GM10248 (cell line): ENCODE measurements at regions of chr6 and their contacts with region 1.

Region 1: DNA sequence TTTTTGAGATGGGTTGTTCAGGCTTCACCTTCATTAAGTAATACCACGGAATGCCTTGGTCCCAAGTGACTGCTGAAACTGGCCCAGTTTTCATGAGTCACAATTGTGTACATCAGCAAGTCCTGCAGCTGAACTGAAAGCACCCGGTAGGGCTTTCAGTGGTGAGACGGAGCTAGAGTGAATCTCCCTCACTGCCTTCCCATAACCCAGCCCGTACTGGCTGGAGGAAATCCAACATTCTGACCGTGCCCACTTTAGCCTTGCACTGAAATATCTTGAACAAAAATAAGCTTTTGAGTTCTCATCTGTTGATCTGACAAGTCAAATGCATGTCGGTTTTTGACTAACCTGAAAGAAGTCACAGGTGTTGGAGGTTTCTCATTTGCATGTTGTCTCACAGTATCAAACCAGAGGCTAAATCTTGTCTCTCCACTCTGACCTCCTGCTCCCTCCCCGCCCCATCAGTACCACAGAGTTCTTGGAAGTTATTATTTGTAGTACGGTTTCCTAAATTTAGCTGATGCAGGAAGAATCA is 35.9 kb downstream of the DUSP22 start:
- DNase-seq: peak; percentile 84
- CTCF ChIP-seq: no peak

Region 2: GRCh38 chr6:305371-306206 is 22.6 kb before region 1 on chr6:
- CTCF ChIA-PET with region 1: interaction called, 420 read pairs
- POLR2A ChIA-PET with region 1: interaction called, 5 read pairs
- DNase-seq: peak; percentile 93
- CTCF ChIP-seq: no peak

Region 3: DNA sequence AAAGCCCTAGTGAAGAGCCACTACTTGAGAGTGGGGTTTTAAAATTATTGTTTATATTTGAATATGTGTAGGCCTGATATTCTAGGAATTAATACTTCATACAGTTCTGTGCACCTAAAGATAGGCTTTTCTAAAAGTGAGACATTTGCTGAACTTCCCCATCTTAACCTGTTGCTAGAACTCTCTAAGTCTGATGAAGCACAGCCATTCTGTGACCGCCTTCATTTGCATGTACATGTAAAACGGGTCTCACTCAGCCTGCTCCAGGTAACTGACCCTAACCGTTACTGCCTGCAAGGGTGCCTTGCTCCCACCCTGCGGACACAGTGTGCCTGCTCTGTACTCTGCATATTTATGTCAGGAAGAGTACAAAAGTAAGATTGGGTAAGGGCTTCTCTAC is 19.0 kb after region 1 on chr6:
- CTCF ChIA-PET with region 1: interaction called, 420 read pairs
- POLR2A ChIA-PET with region 1: no interaction called
- DNase-seq: peak; percentile 83
- CTCF ChIP-seq: peak; percentile 7

Region 4: DNA sequence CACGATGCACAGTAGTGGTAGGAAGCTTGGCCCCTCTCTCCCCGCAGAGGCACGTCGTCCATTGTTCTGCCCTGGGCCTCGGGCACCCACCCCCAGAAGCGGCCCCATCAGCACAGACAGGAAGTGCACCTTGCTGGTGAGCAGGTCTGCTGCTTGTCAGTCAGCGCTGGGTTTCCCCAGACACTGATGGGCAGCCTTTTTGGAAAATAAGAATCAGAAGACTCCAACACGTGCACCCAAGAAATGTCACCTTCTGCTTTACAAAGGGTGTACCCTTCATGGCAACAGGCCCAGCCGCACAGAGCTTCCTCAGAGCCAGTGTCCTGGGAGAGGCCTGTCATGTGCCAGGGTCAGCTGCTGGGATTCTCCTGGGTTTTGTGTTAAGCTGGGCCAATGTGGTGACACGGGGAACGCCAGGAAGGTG is 28.6 kb after region 1 on chr6:
- CTCF ChIA-PET with region 1: interaction called, 22 read pairs
- POLR2A ChIA-PET with region 1: no interaction called
- DNase-seq: peak; percentile 90
- CTCF ChIP-seq: no peak